PC-3 (cell line): ENCODE measurements at regions of chr11 and their contacts with region 1.

Region 1: DNA sequence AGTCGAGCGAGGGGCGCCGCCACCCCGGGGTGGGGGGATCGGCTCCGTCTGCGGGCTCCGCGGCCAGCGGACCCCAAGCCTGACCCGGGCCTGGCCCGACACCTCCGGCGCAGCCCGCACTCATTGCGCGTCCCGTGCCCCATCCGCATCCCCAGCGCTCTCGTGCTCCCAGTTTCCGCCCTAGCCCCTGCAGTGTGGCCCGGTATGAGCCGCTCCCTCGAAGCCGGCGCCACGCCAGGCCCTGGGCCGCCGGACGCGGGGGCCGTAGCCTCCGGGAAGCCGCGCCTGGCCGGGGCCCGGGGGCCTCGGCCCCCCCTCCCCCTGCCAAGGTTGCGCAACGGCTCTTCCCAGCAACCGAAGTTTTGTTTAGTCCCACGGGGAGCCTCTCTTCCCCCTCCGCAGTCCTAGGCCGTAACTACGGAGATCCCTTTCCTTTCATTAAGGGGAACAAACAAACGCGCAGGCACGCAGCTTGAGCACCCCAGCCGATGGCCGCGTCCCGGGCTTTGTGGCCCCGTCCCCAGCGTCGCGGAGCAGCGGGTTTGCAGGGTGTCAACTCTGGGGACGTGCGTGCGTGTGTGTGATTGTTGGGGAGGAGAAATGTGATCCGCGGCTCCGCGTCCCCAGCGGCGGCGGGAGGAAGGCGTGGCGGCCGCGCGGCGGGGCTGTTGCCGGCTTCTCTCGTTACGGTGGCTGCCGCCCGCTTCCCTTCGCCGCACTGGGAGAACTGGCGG is 883 bp downstream of the HIPK3 start:
- DNase-seq: peak; percentile 79
- ATAC-seq: peak; percentile 49
- H3K4me3 ChIP-seq: peak overlapping the region; percentile 84
- H3K27ac ChIP-seq: peak overlapping the region; percentile 92
- H3K4me1 ChIP-seq: peaks cover 18% of the 10 kb centered on the region
- H3K27me3 ChIP-seq: no peaks in the 10 kb centered on the region
- CTCF ChIP-seq: no peak

Region 2: GRCh38 chr11:33116535-33116934 is 141.5 kb before region 1 on chr11:
- CTCF ChIA-PET with region 1: interaction called, 10 read pairs
- POLR2A ChIA-PET with region 1: no interaction called
- intact Hi-C with region 1: no loop called
- DNase-seq: peak; percentile 79
- ATAC-seq: peak; percentile 96
- H3K4me3 ChIP-seq: no peak overlapping the region
- H3K27ac ChIP-seq: no peak overlapping the region
- H3K4me1 ChIP-seq: peaks cover 13% of the 10 kb centered on the region
- H3K27me3 ChIP-seq: no peaks in the 10 kb centered on the region
- CTCF ChIP-seq: no peak

Region 3: GRCh38 chr11:33168709-33169200 is 89.3 kb before region 1 on chr11:
- CTCF ChIA-PET with region 1: no interaction called
- POLR2A ChIA-PET with region 1: no interaction called
- intact Hi-C with region 1: loop called (anchors 5 kb)
- DNase-seq: no peak
- ATAC-seq: no peak
- H3K4me3 ChIP-seq: no peak overlapping the region
- H3K27ac ChIP-seq: no peak overlapping the region
- H3K4me1 ChIP-seq: no peaks in the 10 kb centered on the region
- H3K27me3 ChIP-seq: no peaks in the 10 kb centered on the region
- CTCF ChIP-seq: no peak

Region 4: DNA sequence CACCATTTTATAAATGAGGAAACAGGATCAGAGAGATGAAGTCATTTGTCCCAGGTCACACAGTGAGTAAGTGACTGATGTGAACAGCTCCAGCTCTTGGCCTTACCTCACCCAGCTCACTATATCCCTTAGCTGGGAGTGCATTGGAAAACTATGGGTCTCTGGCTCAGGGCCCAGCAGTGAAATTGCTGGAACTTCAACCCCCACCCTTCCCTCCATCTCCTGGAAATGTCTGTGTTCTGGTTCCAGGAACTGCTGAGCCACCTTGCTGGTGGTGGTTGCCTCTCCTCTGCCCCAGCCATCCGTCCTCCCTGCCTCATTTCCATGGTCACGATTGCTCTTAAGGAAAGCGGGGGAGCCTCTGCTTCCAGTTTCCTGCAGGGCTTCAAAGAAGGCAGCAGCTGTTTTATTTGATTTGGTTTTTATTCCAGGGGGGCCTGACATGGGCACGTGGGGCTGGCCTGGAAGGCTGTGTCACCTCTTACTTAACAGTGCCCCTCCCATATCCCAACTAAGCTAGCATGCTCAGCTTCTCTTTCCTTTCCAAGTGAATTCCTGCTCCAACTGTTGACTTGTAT is 50.6 kb before region 1 on chr11:
- CTCF ChIA-PET with region 1: no interaction called
- POLR2A ChIA-PET with region 1: no interaction called
- intact Hi-C with region 1: no loop called
- DNase-seq: no peak
- ATAC-seq: no peak
- H3K4me3 ChIP-seq: no peak overlapping the region
- H3K27ac ChIP-seq: no peak overlapping the region
- H3K4me1 ChIP-seq: no peaks in the 10 kb centered on the region
- H3K27me3 ChIP-seq: no peaks in the 10 kb centered on the region
- CTCF ChIP-seq: no peak

Region 5: GRCh38 chr11:33273656-33274055 is 15.6 kb after region 1 on chr11:
- CTCF ChIA-PET with region 1: no interaction called
- POLR2A ChIA-PET with region 1: no interaction called
- intact Hi-C with region 1: no loop called
- DNase-seq: no peak
- ATAC-seq: no peak
- H3K4me3 ChIP-seq: no peak overlapping the region
- H3K27ac ChIP-seq: no peak overlapping the region
- H3K4me1 ChIP-seq: peaks cover 16% of the 10 kb centered on the region
- H3K27me3 ChIP-seq: no peaks in the 10 kb centered on the region
- CTCF ChIP-seq: no peak

Region 6: DNA sequence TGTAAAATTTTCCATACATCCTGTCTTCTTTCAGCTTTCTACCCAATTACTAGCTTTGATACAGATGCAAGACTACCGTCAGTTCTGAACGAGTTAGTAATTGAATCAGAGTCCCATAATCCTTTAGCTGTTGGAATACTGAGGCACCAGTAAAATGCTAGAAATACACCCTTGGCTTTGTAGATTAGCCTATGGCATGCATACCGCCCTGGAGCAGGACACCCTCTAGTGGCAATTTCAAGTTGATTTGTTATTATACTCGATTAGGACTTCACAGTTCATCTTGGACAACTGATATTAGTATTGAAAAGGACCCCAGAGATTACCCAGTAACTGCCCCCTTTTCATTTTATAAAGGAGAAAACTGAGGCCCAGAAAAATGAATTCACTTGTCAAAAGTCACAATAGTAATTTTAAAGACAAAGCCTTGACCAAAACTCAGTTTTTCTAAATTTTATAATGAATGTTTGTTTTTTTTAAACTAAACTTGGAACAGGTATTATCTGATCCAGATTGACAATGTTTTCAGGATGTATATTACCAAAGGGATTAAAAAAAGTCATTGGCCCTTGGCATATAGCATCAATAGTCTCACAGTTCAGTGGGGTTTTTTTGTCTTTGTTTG is 71.8 kb after region 1 on chr11:
- CTCF ChIA-PET with region 1: interaction called, 3 read pairs
- POLR2A ChIA-PET with region 1: interaction called, 3 read pairs
- intact Hi-C with region 1: loop called (anchors 2 kb)
- DNase-seq: peak; percentile 74
- ATAC-seq: peak; percentile 93
- H3K4me3 ChIP-seq: no peak overlapping the region
- H3K27ac ChIP-seq: no peak overlapping the region
- H3K4me1 ChIP-seq: no peaks in the 10 kb centered on the region
- H3K27me3 ChIP-seq: no peaks in the 10 kb centered on the region
- CTCF ChIP-seq: peak; percentile 84

Region 7: GRCh38 chr11:33362051-33362910 is 104.2 kb after region 1 on chr11:
- CTCF ChIA-PET with region 1: no interaction called
- POLR2A ChIA-PET with region 1: no interaction called
- intact Hi-C with region 1: no loop called
- DNase-seq: peak; percentile 71
- ATAC-seq: peak; percentile 53
- H3K4me3 ChIP-seq: no peak overlapping the region
- H3K27ac ChIP-seq: no peak overlapping the region
- H3K4me1 ChIP-seq: no peaks in the 10 kb centered on the region
- H3K27me3 ChIP-seq: no peaks in the 10 kb centered on the region
- CTCF ChIP-seq: peak; percentile 76